Activated naive CD4-positive, alpha-beta T cell treated with anti-CD3 and anti-CD28 coated beads for 36 hours (primary cell): ENCODE measurements at regions of chr17 and their contacts with region 1.

Region 1: DNA sequence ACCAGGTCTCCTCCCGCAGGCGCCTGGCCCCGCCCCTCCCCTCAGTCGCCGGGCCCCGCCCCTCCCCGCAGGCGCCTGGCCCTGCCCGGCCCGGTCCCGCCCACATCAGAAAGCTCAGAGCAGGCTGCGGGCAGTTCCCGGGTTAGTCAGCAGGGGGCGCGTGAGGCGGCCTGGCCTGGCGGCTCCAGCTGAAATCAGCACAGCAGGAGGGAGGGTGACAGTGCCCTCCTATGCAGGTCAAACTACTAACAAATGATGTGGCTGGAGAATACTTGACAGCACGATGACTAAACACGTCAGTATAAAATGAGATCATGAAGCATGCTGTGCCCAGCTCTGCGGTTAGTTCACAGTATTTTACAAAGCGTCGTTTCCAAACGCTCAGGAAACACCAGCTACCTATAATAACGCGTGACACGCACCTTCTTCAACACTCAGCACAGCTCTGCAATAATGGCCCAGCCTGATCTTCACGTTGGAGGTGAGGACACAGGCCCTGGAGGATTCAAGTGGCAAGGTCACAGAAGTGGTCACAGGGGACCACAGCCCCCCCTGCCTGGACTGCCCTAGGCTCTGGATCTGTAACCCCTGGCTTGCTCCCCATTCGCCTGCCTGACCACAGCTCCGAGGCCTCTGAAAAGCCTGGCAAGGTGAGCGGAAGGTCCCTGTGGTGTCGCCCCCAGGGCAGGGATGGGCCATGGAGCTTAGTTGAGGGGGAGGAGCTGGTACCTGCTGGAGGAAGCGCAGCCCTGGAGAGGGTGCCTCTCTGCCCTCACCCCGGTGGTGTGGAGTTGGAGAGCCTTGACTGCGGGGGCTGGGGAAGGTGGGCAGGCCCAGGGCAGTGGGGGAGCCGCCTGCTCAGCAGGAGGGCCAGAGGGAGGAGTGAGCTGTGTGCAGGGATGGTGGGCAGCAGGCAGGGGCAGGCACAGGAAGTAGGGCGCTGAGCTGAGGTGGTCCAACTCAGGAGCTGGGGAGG is 81.2 kb downstream of the KCNJ12 start:
- DNase-seq: peak; percentile 96
- H3K4me3 Mint-ChIP-seq: no peak overlapping the region
- H3K27ac Mint-ChIP-seq: peak overlapping the region; percentile 53
- H3K4me1 Mint-ChIP-seq: peaks cover 22% of the 10 kb centered on the region
- H3K27me3 Mint-ChIP-seq: peaks cover 8% of the 10 kb centered on the region

Region 2: DNA sequence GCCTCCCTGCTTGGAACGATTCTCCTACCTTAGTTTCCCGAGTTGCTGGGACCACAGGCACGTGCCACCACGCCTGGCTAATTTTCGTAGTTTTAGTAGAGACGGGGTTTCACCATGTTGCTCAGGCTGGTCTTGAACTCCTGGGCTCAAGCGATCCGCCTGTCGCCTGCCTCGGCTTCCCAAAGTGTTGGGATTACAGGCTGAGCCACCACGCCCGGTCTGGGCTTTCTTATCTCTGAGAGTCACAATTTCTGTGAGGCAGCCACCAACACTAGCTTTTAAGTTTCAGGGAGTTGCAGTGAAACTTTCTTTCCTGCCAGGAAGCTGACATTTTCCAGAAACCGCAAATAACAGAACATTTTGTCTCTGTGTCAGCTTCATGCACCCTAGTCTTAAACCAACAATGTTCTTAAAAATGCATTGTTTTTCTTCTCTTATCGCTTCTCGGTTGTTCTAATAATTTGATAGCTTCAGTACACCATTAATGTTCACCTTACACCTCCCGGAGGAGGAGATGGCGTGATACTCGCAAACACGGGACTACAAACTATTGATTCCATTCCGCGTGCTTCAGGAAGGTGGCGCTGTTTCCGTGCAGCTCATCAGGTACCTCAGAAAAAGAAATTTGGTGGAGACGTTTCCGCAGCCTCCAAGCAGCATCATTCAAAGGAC is 338.0 kb before region 1 on chr17:
- CTCF ChIA-PET with region 1: no interaction called
- intact Hi-C with region 1: loop called (anchors 2 kb)
- DNase-seq: peak; percentile 83
- H3K4me3 Mint-ChIP-seq: peak overlapping the region; percentile 16
- H3K27ac Mint-ChIP-seq: no peak overlapping the region
- H3K4me1 Mint-ChIP-seq: peaks cover 6% of the 10 kb centered on the region
- H3K27me3 Mint-ChIP-seq: peaks cover 2% of the 10 kb centered on the region

Region 3: DNA sequence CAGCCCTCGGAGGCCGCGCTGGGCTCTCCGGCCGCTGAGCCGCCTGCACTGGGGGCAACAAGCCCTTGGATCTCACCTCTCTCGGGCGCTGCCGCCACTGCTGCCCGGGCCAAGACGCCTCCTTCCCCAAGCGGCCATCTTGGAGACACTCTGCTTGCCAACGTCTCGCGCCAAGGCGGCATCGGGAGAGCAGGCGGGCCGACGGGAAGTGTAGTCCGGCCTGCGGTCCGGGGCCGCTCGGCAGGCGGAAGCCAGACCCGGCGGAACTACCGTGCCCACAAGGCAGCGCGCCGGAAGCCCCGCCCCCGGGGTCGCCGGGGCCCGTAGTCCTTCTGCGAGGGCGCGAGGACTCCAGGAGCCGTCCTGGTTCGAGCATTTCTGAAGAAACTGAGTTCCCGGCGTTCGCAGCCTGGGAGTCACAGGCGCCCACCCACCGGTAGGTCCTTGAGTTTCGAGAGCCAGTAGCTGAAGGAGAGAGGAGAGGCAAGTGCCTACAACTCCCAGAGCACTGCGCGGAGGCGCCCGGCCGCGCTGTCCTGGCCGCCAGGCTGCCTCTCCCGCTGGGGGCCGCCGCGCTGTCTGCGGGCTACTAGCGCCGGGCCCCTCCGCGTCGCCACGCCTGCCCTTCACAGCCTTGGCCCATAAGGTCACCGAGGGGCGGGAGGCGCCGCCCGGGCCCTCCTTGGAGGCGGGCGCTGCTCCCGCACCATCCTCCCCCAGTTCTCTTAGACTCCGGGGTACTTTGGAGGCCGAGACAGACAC is 243.1 kb before region 1 on chr17 and contains the start of gene TMEM11:
- CTCF ChIA-PET with region 1: no interaction called
- intact Hi-C with region 1: loop called (anchors 2 kb)
- DNase-seq: peak; percentile 95
- H3K4me3 Mint-ChIP-seq: peak within 1 kb of the TSS; percentile 91
- H3K27ac Mint-ChIP-seq: peak within 1 kb of the TSS; percentile 91
- H3K4me1 Mint-ChIP-seq: peaks cover 65% of the 10 kb centered on the region
- H3K27me3 Mint-ChIP-seq: no peaks in the 10 kb centered on the region
- total RNA-seq, gene TMEM11: 23.6 to 28.2 TPM

Region 4: DNA sequence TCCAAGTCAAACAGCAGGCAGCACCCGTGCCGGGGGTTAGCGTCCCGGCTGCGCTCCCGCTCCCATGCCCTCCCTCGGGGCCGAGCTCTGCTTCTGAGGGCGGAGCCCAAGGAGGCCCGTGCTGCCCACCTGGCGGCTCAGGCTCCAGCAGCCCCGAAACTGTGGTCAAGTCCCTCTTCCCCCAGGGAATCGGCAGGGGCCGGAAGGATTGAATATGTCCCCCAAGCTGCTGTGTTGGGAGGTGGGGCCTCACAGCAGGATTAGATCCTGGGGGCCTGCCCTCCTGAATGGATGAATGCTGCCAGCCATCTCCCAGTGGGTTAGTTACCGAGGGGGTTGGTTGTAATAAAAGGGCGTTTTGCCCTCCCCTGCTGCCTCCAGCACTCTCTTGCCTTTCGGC is 138.9 kb before region 1 on chr17:
- CTCF ChIA-PET with region 1: no interaction called
- intact Hi-C with region 1: loop called (anchors 5 kb)
- DNase-seq: no peak
- H3K4me3 Mint-ChIP-seq: no peak overlapping the region
- H3K27ac Mint-ChIP-seq: no peak overlapping the region
- H3K4me1 Mint-ChIP-seq: peaks cover 7% of the 10 kb centered on the region
- H3K27me3 Mint-ChIP-seq: no peaks in the 10 kb centered on the region

Region 5: GRCh38 chr17:21539146-21539545 is 81.8 kb after region 1 on chr17:
- CTCF ChIA-PET with region 1: interaction called, 10 read pairs
- intact Hi-C with region 1: no loop called
- DNase-seq: no peak
- H3K4me3 Mint-ChIP-seq: no peak overlapping the region
- H3K27ac Mint-ChIP-seq: peak overlapping the region; percentile 69
- H3K4me1 Mint-ChIP-seq: peaks cover 33% of the 10 kb centered on the region
- H3K27me3 Mint-ChIP-seq: no peaks in the 10 kb centered on the region

Region 6: GRCh38 chr17:21742326-21742725 is 285.0 kb after region 1 on chr17:
- CTCF ChIA-PET with region 1: no interaction called
- intact Hi-C with region 1: loop called (anchors 10 kb)
- DNase-seq: no peak
- H3K4me3 Mint-ChIP-seq: no peak overlapping the region
- H3K27ac Mint-ChIP-seq: no peak overlapping the region
- H3K4me1 Mint-ChIP-seq: no peaks in the 10 kb centered on the region
- H3K27me3 Mint-ChIP-seq: no peaks in the 10 kb centered on the region